ENCODE measurements at regions of chr4 and their contacts with region 1.

Region 1: DNA sequence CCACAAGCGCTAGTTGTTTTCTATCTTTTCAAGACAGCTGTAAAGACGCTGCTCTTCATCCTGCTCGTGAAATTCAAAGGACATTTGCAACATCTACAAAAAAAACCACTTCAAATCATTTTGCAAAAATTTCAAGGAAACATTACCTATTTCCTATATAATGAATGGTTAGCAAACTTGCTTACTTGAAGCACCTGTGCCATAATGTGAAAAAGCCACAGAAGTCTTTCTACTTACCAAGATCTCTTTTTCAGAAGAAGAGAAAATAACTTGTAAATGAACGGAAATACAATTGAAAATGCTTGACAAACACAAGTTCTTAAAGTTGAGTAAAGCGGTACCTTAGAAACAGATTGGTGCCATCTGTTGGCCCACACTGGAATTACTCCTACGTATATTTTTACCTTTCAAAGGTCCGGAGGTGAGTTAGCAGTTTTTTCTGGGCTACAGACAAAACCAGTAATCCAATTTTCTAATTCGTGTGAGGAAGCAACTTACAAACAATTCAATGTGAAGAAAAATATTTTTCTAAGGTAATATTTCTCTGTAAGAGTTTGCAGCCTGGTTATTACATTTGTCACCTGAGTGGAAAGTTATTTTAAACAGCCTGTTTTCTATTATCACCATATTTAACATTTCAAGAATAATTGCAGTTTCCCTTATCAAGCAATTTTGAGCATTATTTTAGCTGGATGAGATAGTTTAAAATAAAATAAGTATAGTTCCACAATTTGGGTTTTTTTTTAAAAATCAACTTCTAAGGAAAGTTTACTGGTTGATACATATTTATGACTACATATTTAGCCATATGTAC is at the start of gene TLR6:
- DNase-seq: peak; percentile 86
- H3K4me3 Mint-ChIP-seq: peak within 1 kb of the TSS; percentile 66
- H3K27ac Mint-ChIP-seq: peak within 1 kb of the TSS; percentile 84
- H3K4me1 Mint-ChIP-seq: peaks cover 35% of the 10 kb centered on the region
- H3K27me3 Mint-ChIP-seq: no peaks in the 10 kb centered on the region
- total RNA-seq, gene TLR6: 3.6 TPM

Region 2: GRCh38 chr4:38310446-38311043 is 546.2 kb before region 1 on chr4:
- CTCF ChIA-PET with region 1: no interaction called
- intact Hi-C with region 1: loop called (anchors 2 kb)
- DNase-seq: peak; percentile 89
- H3K4me3 Mint-ChIP-seq: peak overlapping the region; percentile 10
- H3K27ac Mint-ChIP-seq: peak overlapping the region; percentile 72
- H3K4me1 Mint-ChIP-seq: peaks cover 65% of the 10 kb centered on the region
- H3K27me3 Mint-ChIP-seq: peaks cover 2% of the 10 kb centered on the region

Region 3: DNA sequence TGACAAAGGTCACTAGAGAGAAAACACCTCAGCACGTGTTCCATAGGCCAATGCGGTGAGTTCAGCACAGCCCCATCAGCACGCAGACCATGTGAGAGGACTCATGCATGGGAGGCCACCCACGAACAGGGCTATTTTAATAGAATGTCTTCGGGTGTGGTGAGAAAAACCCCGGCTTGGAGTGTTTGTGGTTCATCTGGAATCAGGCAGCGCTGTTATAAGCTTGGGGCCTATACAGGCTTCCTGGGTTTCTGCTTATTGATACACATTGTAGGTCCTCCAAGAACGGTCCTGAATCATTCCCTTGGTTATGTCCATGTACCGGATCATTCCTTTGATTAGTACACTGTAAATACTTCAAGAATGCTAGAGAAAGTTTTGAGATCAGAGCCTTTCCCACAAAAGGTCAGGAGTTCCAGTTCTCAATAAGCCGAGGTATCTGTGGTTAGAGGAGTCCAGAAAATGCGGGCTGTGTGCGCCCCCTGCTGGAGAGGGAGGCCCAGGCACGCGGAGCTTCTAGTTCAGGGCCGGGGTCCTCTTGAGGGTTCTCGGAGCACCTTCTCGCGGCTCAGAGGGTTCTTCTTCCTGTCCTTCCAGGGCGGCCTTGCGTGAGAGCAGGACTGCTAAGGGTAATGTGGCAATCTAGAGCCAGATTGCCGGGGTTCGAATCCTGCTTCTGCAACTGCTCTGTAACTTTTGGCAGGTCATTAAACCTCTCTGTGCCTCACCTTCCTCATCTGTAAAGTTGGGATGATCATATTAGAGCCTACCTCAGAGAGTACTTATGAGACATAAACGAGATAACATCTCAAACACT is 125.7 kb before region 1 on chr4:
- CTCF ChIA-PET with region 1: no interaction called
- intact Hi-C with region 1: no loop called
- DNase-seq: peak; percentile 93
- H3K4me3 Mint-ChIP-seq: no peak overlapping the region
- H3K27ac Mint-ChIP-seq: no peak overlapping the region
- H3K4me1 Mint-ChIP-seq: peaks cover 16% of the 10 kb centered on the region
- H3K27me3 Mint-ChIP-seq: no peaks in the 10 kb centered on the region

Region 4: GRCh38 chr4:38768968-38769394 is 87.8 kb before region 1 on chr4:
- CTCF ChIA-PET with region 1: interaction called, 16 read pairs
- intact Hi-C with region 1: no loop called
- DNase-seq: no peak
- H3K4me3 Mint-ChIP-seq: no peak overlapping the region
- H3K27ac Mint-ChIP-seq: no peak overlapping the region
- H3K4me1 Mint-ChIP-seq: no peaks in the 10 kb centered on the region
- H3K27me3 Mint-ChIP-seq: no peaks in the 10 kb centered on the region

Region 5: DNA sequence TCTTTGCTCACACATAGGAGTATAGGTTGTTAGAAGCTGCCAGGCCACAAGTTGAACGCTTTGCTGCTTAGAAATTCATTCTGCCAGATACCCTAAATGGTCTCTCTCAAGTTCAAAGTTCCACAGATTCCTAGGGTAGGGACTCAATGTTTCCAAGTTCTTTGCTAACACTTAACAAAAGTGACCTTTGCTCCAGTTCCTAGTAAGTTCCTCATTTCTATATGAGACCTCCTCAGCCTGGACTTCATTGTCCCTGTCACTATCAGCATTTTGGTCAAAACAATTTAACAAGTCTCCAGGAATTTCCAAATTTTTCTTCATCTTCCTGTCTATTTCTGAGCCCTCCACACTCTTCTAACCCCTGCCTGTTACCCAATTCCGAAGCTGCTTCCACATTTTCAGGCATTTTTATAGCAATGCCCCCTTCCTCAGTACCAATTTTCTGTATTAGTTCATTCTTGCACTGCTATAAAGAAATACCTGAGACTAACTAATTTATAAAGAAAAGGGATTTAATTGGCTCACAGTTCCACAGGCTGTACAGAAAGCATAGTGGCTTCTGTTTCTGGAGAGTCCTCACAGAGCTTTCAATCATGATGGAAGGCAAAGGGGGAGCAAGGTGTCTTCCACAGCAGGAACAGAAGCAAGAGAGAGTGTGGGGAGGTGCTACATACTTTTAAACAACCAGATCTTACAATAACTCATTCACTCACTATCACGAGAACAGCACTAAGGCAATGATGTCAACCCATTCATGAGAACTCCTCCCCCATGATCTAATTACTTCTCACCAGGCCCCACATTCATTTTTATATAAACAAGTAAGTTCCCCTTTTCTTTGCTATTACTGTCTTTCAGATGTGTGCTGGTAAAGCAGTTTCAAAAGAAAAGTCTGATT is 40.6 kb before region 1 on chr4:
- CTCF ChIA-PET with region 1: no interaction called
- intact Hi-C with region 1: loop called (anchors 1 kb)
- DNase-seq: no peak
- H3K4me3 Mint-ChIP-seq: no peak overlapping the region
- H3K27ac Mint-ChIP-seq: peak overlapping the region; percentile 29
- H3K4me1 Mint-ChIP-seq: peaks cover 25% of the 10 kb centered on the region
- H3K27me3 Mint-ChIP-seq: no peaks in the 10 kb centered on the region

Region 6: DNA sequence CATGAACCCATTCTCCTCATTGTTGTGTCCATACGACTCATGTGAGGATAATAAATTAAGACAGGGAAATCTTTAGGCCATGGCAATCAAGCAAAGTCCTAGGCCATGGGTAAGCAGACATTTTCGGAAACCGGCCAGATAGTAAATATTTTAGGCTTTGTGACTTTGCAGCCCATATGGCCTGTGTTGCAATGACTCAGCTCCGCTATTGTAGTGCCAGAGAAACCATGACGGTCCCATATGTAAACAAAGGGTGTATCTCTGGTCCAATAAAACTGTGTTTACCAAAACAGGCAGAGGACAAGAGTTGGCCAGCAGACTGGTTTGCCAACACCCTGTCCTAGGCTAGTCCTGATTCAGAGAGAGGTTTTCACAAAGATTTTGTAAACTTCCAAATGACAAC is 15.9 kb after region 1 on chr4:
- CTCF ChIA-PET with region 1: interaction called, 17 read pairs
- intact Hi-C with region 1: no loop called
- DNase-seq: no peak
- H3K4me3 Mint-ChIP-seq: no peak overlapping the region
- H3K27ac Mint-ChIP-seq: no peak overlapping the region
- H3K4me1 Mint-ChIP-seq: no peaks in the 10 kb centered on the region
- H3K27me3 Mint-ChIP-seq: peaks cover 16% of the 10 kb centered on the region